CD8-positive, alpha-beta memory T cell (primary cell): ENCODE measurements at regions of chr19 and their contacts with region 1.

Region 1: DNA sequence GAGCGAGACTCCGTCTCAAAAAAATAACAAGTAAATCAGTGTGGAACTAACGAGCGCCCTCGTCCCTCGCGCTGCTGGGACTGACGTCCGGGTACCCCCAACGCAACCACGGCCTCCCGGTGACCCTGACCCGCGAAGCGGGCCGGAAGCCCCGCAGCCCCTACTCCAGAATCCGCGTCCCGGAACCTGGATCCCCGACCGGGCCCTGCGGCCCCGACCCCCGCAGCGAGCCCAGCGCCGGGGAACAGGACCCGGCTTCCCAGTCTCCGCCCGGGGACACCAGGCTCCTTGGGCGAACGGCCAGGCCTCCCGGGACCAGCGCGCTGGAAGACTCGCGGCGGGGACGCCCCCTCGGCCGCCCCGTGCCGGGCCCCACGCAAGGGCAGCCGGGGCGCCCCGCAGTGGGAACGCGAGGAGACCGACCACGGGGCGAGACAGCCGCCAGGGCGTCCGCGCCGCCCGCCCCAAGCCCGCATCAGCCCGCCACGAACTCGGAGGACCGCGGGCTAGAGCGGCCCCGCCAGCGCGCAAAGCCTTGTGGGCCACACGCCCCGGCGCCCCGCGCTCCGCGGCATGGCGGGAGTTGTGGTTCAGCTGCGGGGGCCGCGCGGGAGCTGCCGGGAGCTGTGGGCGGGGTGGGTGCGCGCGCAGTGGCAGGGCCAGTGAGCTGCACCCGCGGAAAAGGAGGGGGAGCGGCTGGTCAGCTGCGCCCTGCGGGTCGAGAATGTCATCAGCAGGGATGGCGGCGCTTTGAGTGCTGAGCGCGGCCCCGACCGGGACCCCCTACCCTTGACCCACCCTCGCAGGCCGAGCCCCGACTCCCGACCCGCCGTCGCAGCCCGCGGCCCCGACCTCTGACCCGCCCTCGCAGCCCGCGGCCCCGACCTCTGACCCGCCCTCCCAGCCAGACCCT is 7.5 kb upstream of the MADCAM1 start:
- DNase-seq: peak; percentile 81 to 91 (median 90)
- H3K4me3 ChIP-seq: peak overlapping the region; percentile 68
- H3K4me3 Mint-ChIP-seq: peak overlapping the region; percentile 75 to 89 (median 80)
- H3K27ac ChIP-seq: peak overlapping the region; percentile 83
- H3K27ac Mint-ChIP-seq: peak overlapping the region in 5 of 8 donors; percentile 39 to 90 (median 47)
- H3K4me1 ChIP-seq: peaks cover 4% of the 10 kb centered on the region
- H3K4me1 Mint-ChIP-seq: peaks cover 0 to 15% (median 5%) of the 10 kb centered on the region in 3 donors
- H3K27me3 ChIP-seq: no peaks in the 10 kb centered on the region
- H3K27me3 Mint-ChIP-seq: peaks cover 6 to 15% of the 10 kb centered on the region in 2 donors

Region 2: GRCh38 chr19:408898-409515 is 79.8 kb before region 1 on chr19 and contains the start of gene C2CD4C:
- CTCF ChIA-PET with region 1: no interaction called
- POLR2A ChIA-PET with region 1: no interaction called
- DNase-seq: peak in 2 of 5 donors; percentile 25 to 44
- H3K4me3 ChIP-seq: peak within 1 kb of the TSS; percentile 15
- H3K4me3 Mint-ChIP-seq: peak within 1 kb of the TSS; percentile 56 to 91 (median 86)
- H3K27ac ChIP-seq: no peak within 1 kb of the TSS
- H3K27ac Mint-ChIP-seq: peak within 1 kb of the TSS in 6 of 8 donors; percentile 45 to 80 (median 56)
- H3K4me1 ChIP-seq: peaks cover 6% of the 10 kb centered on the region
- H3K4me1 Mint-ChIP-seq: peaks cover 6 to 7% (median 6%) of the 10 kb centered on the region in 3 donors
- H3K27me3 ChIP-seq: peaks cover 13% of the 10 kb centered on the region
- H3K27me3 Mint-ChIP-seq: peaks cover 11 to 21% of the 10 kb centered on the region in 2 donors
- total RNA-seq, gene C2CD4C: not detected

Region 3: DNA sequence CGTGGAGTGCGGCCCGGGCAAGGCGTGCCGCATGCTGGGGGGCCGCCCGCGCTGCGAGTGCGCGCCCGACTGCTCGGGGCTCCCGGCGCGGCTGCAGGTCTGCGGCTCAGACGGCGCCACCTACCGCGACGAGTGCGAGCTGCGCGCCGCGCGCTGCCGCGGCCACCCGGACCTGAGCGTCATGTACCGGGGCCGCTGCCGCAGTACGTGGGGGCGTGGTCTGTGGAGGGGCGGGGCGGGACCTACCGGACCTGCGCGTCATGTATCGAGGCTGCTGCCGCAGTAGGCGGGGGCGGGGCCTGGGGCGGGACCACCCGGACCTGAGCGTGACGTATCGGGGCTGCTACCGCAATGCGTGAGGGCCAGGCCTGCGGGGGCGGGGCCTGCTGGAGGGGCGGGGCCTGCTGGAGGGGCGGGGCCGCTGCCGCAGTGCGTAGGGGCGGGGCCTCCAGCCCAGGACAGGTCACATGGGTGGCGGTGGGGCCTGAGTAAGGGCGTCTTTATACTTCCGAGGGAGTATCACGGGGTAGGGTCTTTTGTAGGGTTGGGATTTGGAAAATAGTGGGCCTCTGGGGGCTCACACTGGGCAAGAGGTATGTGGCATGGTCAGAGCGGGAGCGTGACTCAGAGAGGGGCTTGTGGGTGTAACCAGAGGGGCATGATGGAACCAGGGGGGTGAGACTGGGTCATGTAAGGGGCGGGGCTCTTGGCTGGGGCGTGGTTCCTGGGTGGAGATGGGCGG is 191.7 kb after region 1 on chr19:
- CTCF ChIA-PET with region 1: no interaction called
- POLR2A ChIA-PET with region 1: interaction called, 13 read pairs
- DNase-seq: peak; percentile 97 to 100 (median 99)
- H3K4me3 ChIP-seq: peak overlapping the region; percentile 77
- H3K4me3 Mint-ChIP-seq: peak overlapping the region; percentile 74 to 92 (median 91)
- H3K27ac ChIP-seq: peak overlapping the region; percentile 74
- H3K27ac Mint-ChIP-seq: peak overlapping the region; percentile 76 to 100 (median 98)
- H3K4me1 ChIP-seq: peaks cover 13% of the 10 kb centered on the region
- H3K4me1 Mint-ChIP-seq: peaks cover 0 to 10% (median 3%) of the 10 kb centered on the region in 3 donors
- H3K27me3 ChIP-seq: peaks cover 5% of the 10 kb centered on the region
- H3K27me3 Mint-ChIP-seq: peaks cover 2 to 10% of the 10 kb centered on the region in 2 donors